Esophagus muscularis mucosa (tissue), 4 donors: ENCODE measurements at regions of chr17 and their contacts with region 1.

Region 1: GRCh38 chr17:693791-694638 is 20.6 kb downstream of the VPS53 start:
- DNase-seq: no peak
- H3K4me3 ChIP-seq: no peak overlapping the region
- H3K27ac ChIP-seq: peak overlapping the region in 3 of 4 donors; percentile 35 to 71 (median 50)
- H3K4me1 ChIP-seq: peaks cover 0 to 18% (median 11%) of the 10 kb centered on the region in 4 donors
- H3K27me3 ChIP-seq: no peaks in the 10 kb centered on the region
- CTCF ChIP-seq: no peak
- EP300 ChIP-seq: no peak
- POLR2A ChIP-seq: no peak

Region 2: DNA sequence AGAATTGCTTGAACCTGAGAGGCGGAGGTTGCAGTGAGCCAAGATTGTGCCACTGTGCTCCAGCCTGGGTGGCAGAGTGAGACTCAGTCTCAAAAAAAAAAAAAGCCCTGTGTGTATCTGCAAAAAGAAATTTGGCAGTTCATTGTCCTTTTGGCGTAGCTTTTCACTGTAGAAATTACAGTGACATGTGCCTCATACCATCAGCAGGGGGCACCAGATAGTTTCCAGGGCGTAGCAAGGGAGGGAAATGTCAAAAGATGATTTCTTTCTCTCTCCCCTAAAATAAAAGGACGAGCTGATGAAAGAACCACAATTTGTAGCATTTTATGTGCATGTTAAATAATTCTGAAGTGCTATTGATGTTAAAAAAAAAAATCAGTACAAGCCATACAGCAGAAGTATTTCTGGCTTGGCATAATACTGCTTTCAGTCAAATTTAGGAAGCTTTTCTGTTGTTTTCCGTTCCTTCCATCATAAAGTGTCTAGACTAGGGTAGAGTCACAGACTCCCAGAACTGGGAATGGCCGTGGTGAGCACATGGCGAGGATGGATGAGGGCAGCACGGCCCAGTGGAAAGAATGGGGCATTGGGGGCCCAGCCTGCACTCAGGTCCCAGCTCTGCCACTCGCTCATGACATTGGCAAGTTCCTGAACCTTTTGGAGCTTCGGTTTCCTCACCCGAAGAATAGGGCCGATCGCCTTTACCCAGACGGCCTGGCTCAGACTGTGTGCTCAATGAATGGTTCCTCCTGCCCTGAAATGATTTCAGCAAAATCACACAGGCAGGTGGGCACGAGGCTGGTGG is 281.6 kb before region 1 on chr17:
- intact Hi-C with region 1: loop called (anchors 1 kb)
- DNase-seq: no peak
- H3K4me3 ChIP-seq: no peak overlapping the region
- H3K27ac ChIP-seq: peak overlapping the region in 1 of 4 donors; percentile 28
- H3K4me1 ChIP-seq: peaks cover 15 to 30% (median 29%) of the 10 kb centered on the region in 4 donors
- H3K27me3 ChIP-seq: no peaks in the 10 kb centered on the region
- CTCF ChIP-seq: peak; percentile 70 to 84 (median 79)
- EP300 ChIP-seq: no peak
- POLR2A ChIP-seq: no peak

Region 3: DNA sequence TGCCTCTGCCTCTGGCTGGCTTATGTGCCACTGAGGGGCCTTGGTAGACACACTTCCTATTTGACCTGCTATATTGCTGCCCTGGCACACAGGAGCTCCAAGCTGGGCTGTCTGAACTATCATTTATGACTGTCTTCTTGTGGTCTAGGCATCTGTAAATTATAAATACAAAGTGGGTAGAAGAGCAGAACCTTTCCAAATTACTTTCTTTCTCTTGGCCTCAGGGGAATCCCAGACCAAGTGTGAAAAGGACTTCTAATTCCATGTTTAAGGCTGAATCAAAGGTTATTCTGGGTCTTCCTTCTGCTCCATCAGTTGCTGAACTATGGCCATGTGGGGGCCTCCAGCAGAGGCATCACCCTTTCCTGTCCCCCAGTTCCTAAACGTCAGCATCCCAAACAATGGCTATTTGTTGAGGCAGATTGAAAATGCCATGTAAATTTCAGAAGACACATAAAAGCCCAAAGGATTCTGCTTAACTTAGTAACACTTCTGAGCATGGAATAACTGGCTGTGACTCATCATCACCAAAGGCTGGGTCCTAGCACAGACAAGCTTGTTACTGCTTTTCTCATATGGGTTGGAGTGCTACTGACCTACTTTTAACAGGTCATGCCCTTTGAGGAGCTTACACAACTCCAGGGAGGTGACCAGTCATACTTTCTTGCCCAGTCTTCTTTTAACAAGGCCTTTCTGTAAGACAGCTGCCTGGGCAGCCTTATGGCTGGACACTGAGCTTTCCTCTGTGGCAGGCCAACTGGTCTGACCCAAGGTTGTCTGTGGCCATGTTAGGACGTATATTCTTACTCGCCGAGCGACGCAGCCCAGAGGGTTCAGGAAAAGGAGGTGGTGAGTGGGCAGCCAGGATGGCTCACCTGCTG is 134.2 kb before region 1 on chr17:
- intact Hi-C with region 1: loop called (anchors 10 kb)
- DNase-seq: no peak
- H3K4me3 ChIP-seq: no peak overlapping the region
- H3K27ac ChIP-seq: peak overlapping the region; percentile 55 to 75 (median 63)
- H3K4me1 ChIP-seq: peaks cover 21 to 42% (median 25%) of the 10 kb centered on the region in 4 donors
- H3K27me3 ChIP-seq: no peaks in the 10 kb centered on the region
- CTCF ChIP-seq: no peak
- EP300 ChIP-seq: no peak
- POLR2A ChIP-seq: no peak

Region 4: GRCh38 chr17:601244-601925 is 92.6 kb before region 1 on chr17:
- intact Hi-C with region 1: no loop called
- DNase-seq: no peak
- H3K4me3 ChIP-seq: no peak overlapping the region
- H3K27ac ChIP-seq: peak overlapping the region; percentile 36 to 80 (median 46)
- H3K4me1 ChIP-seq: peaks cover 9 to 23% (median 20%) of the 10 kb centered on the region in 4 donors
- H3K27me3 ChIP-seq: no peaks in the 10 kb centered on the region
- CTCF ChIP-seq: no peak
- EP300 ChIP-seq: no peak
- POLR2A ChIP-seq: no peak